Common myeloid progenitor, CD34-positive (primary cell): ENCODE measurements at regions of chr16 and their contacts with region 1.

Region 1: DNA sequence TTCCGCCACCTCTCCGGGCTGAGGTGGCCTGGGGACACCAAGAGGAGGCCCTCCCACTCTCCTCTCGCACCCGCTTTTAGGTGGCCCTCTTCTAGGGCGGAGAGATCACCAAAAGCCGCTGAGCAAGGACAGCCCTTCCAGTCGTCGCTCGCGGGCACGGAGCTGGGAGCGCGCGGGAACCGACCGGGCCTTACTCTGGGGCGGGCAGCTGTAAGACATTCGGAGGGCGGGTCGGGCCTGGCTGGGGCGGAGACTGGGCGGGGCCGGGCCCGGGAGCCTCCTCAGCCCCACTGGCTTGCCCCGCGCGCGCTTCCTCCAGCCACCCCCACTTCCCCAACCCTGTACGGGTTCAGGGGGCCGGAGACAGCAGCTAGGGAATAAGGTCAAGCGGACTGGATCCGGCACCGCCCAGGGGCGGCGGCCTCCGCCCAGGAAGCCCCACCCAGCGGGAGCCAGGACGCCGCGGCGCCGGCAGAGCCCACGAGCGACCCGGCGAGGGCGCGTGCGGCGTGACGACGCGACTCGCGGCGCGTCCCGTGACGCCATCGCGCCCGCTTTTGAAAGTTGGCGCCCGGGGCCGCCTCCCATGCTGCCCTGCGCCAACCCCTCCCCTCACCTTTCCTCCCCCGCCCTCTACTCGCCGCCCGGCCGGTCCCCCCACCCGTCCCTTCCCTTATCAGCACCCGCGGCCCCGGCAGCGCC is 351 bp upstream of the CTCF start:
- DNase-seq: peak; percentile 97 to 99 (median 98)
- H3K4me3 ChIP-seq: peak overlapping the region; percentile 68 to 100 (median 88)
- H3K27ac ChIP-seq: peak overlapping the region; percentile 83 to 96
- H3K4me1 ChIP-seq: peaks cover 15 to 43% (median 35%) of the 10 kb centered on the region in 4 experiments
- H3K27me3 ChIP-seq: no peaks in the 10 kb centered on the region

Region 2: DNA sequence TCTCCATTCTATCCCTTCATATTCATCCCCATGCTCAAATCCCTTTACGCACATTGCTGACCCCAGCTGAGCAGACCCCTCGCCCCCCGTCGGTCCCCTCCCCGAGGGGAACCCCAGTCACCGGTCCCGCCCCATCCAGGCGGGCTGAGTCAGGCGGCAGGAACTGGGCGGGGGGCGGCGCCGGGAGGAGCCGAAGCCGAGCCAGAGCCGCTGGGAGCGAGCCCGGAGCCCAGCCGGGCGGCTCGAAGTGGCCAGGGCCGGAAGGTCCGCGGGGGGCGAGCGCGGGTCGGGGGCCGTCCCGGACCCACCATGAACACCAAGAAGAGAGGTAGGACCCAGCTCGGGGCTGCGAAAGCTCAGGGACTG is 24.7 kb before region 1 on chr16:
- CTCF ChIA-PET with region 1: interaction called, 308 read pairs
- POLR2A ChIA-PET with region 1: interaction called, 3 read pairs
- DNase-seq: peak in 2 of 3 donors; percentile 55 to 65
- H3K4me3 ChIP-seq: peak overlapping the region; percentile 42 to 86 (median 73)
- H3K27ac ChIP-seq: peak overlapping the region in 1 of 2 experiments; percentile 66
- H3K4me1 ChIP-seq: peaks cover 0 to 57% (median 45%) of the 10 kb centered on the region in 4 experiments
- H3K27me3 ChIP-seq: no peaks in the 10 kb centered on the region

Region 3: DNA sequence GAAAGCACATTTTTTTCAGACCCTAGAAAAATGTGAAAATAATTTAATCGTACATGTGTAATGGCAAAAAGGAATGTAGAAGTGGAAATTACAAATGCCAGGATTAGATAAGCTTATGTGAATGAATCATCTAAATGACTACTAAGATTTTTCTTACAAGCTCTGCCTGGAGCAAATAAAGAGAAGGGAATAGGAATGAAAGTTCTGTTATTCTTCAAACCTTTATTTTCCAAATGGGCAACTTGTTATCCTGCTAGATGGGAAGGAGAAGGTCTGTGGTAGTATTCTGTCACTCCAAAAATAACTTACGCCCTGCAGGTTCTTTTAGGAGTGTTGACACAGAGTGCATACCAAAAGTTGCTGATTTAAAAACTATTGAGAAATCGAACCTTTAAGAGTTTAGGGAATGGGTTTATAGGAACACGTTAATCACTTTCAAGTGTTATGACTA is 10.0 kb after region 1 on chr16:
- CTCF ChIA-PET with region 1: interaction called, 15 read pairs
- POLR2A ChIA-PET with region 1: interaction called, 5 read pairs
- DNase-seq: no peak
- H3K4me3 ChIP-seq: no peak overlapping the region
- H3K27ac ChIP-seq: no peak overlapping the region
- H3K4me1 ChIP-seq: no peaks in the 10 kb centered on the region
- H3K27me3 ChIP-seq: no peaks in the 10 kb centered on the region

Region 4: DNA sequence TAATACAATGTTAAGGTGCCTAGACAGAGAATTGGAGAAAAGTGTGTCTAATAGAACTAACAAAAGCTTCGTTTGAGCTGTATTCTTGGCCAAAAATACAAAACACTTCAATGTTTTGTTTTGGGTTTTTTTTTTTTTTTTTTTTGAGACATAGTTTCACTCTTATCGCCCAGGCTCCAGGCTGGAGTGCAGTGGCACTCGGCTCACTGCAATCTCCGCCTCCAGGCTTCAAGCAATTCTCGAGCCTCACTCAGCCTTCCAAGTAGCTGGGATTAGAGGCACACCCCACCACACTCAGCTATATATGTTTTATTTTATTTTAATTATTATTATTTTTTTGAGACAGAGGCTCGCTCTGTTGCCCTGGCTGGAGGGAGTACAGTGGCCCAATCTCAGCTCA is 44.7 kb after region 1 on chr16:
- CTCF ChIA-PET with region 1: no interaction called
- POLR2A ChIA-PET with region 1: no interaction called
- DNase-seq: no peak
- H3K4me3 ChIP-seq: no peak overlapping the region
- H3K27ac ChIP-seq: no peak overlapping the region
- H3K4me1 ChIP-seq: no peaks in the 10 kb centered on the region
- H3K27me3 ChIP-seq: no peaks in the 10 kb centered on the region